GM12878 (cell line): ENCODE measurements at regions of chr2 and their contacts with region 1.

Region 1: DNA sequence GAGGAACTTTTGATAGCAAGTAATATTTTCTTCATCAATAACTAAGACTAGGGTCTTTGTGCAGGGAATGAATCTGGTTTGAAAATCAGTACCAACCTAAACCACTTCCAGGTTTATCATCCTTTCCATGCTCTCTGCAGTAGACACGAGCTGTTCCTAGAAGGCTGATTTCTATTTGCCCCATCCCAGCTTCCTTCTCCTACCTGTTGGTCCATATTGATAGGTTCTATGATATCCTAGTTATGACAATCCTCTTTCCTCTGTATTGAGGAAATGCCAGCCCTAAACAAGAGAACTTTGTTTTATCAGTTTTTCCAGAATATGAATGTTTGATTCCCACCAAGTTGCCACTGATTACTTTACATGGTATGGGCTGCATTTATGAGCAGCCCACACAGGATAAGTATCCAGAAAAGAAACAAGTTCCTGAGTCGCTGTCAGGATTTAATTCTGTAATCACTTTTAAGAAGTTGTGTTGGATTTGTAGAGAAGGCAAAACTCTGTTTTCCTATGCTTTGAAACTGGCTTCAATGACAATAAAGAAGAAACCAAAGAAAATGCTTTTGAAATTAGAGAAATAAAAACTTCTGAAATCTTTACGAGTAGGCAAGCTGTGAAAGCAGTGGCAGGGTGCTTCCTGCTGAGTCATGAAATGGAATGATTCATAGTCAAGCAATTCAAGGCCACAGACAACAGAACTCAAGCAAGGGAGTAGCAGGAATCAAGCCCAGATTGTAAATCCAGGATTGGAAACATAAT is 37.3 kb upstream of the TANK start:
- DNase-seq: no peak
- ATAC-seq: peak; percentile 81
- H3K4me3 ChIP-seq: no peak overlapping the region
- H3K27ac ChIP-seq: no peak overlapping the region; the same call in 1 of the 2 replicates
- H3K4me1 ChIP-seq: no peaks in the 10 kb centered on the region
- H3K27me3 ChIP-seq: no peaks in the 10 kb centered on the region
- CTCF ChIP-seq: no peak
- EP300 ChIP-seq: no peak
- POLR2A ChIP-seq: no peak
- RAD21 ChIP-seq: no peak

Region 2: GRCh38 chr2:161004379-161004778 is 118.6 kb before region 1 on chr2:
- CTCF ChIA-PET with region 1: no interaction called
- POLR2A ChIA-PET with region 1: no interaction called
- RAD21 ChIA-PET with region 1: no interaction called
- SMC1A ChIA-PET with region 1: no interaction called
- in situ Hi-C with region 1: no loop called
- intact Hi-C with region 1: no loop called
- DNase-seq: no peak
- ATAC-seq: no peak; the same call in 2 of the 3 replicates
- H3K4me3 ChIP-seq: no peak overlapping the region
- H3K27ac ChIP-seq: no peak overlapping the region
- H3K4me1 ChIP-seq: no peaks in the 10 kb centered on the region
- H3K27me3 ChIP-seq: no peaks in the 10 kb centered on the region
- CTCF ChIP-seq: peak in 2 of 3 experiments; percentile 18 to 19; a peak in 3 of 6 replicates
- EP300 ChIP-seq: no peak
- POLR2A ChIP-seq: no peak
- RAD21 ChIP-seq: 0 out of 2 replicates have a peak, but pooled peaks have one; percentile 7

Region 3: GRCh38 chr2:161112908-161113307 is 10.0 kb before region 1 on chr2:
- CTCF ChIA-PET with region 1: interaction called, 68 read pairs
- POLR2A ChIA-PET with region 1: interaction called, 16 read pairs
- RAD21 ChIA-PET with region 1: interaction called, 5 read pairs
- SMC1A ChIA-PET with region 1: interaction called, 15 read pairs
- in situ Hi-C with region 1: no loop called
- intact Hi-C with region 1: no loop called
- DNase-seq: no peak
- ATAC-seq: no peak
- H3K4me3 ChIP-seq: no peak overlapping the region
- H3K27ac ChIP-seq: no peak overlapping the region
- H3K4me1 ChIP-seq: no peaks in the 10 kb centered on the region
- H3K27me3 ChIP-seq: no peaks in the 10 kb centered on the region
- CTCF ChIP-seq: no peak
- EP300 ChIP-seq: no peak
- POLR2A ChIP-seq: no peak
- RAD21 ChIP-seq: no peak